ENCODE measurements at regions of chr1 and their contacts with region 1.

Region 1: GRCh38 chr1:172532700-172533509 is at the start of gene SUCO:
- DNase-seq: peak; percentile 100
- H3K4me3 Mint-ChIP-seq: peak within 1 kb of the TSS; percentile 94
- H3K27ac Mint-ChIP-seq: peak within 1 kb of the TSS; percentile 100
- H3K4me1 Mint-ChIP-seq: peaks cover 39% of the 10 kb centered on the region
- H3K27me3 Mint-ChIP-seq: no peaks in the 10 kb centered on the region
- total RNA-seq, gene SUCO: 23.9 TPM

Region 2: GRCh38 chr1:171741872-171742576 is 790.9 kb before region 1 on chr1 and contains the start of gene VAMP4:
- CTCF ChIA-PET with region 1: no interaction called
- intact Hi-C with region 1: loop called (anchors 1 kb)
- DNase-seq: peak; percentile 90
- H3K4me3 Mint-ChIP-seq: peak within 1 kb of the TSS; percentile 96
- H3K27ac Mint-ChIP-seq: peak within 1 kb of the TSS; percentile 99
- H3K4me1 Mint-ChIP-seq: peaks cover 40% of the 10 kb centered on the region
- H3K27me3 Mint-ChIP-seq: no peaks in the 10 kb centered on the region
- total RNA-seq, gene VAMP4: 10.5 to 10.9 TPM

Region 3: GRCh38 chr1:172254521-172255222 is 278.2 kb before region 1 on chr1:
- CTCF ChIA-PET with region 1: no interaction called
- intact Hi-C with region 1: no loop called
- DNase-seq: no peak
- H3K4me3 Mint-ChIP-seq: no peak overlapping the region
- H3K27ac Mint-ChIP-seq: no peak overlapping the region
- H3K4me1 Mint-ChIP-seq: peaks cover 18% of the 10 kb centered on the region
- H3K27me3 Mint-ChIP-seq: no peaks in the 10 kb centered on the region

Region 4: GRCh38 chr1:172338295-172338735 is 194.6 kb before region 1 on chr1:
- CTCF ChIA-PET with region 1: no interaction called
- intact Hi-C with region 1: loop called (anchors 1 kb)
- DNase-seq: peak; percentile 89
- H3K4me3 Mint-ChIP-seq: no peak overlapping the region
- H3K27ac Mint-ChIP-seq: peak overlapping the region; percentile 67
- H3K4me1 Mint-ChIP-seq: peaks cover 49% of the 10 kb centered on the region
- H3K27me3 Mint-ChIP-seq: no peaks in the 10 kb centered on the region

Region 5: GRCh38 chr1:172566196-172566997 is 33.5 kb after region 1 on chr1:
- CTCF ChIA-PET with region 1: no interaction called
- intact Hi-C with region 1: loop called (anchors 1 kb)
- DNase-seq: peak; percentile 43
- H3K4me3 Mint-ChIP-seq: no peak overlapping the region
- H3K27ac Mint-ChIP-seq: peak overlapping the region; percentile 54
- H3K4me1 Mint-ChIP-seq: peaks cover 16% of the 10 kb centered on the region
- H3K27me3 Mint-ChIP-seq: no peaks in the 10 kb centered on the region

Region 6: DNA sequence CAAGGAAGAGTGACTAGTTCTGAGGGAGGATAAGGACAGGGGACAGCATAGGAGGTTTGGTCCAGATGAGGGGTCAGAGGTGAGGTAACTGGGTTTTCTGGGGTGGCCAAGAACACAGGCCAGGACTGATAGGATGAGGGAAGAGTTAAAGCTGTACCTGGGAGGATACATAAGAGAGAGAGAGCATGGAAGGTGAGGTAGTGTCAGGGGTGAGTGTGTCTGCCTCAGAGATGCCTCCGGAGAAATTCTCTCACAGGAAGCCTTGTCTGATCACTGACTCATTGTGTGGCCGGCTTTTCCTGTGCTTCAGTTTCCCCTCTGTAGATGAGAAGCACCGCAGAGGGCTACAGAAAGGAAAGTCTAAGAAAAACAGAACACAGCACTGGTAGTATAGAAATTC is 166.2 kb after region 1 on chr1:
- CTCF ChIA-PET with region 1: no interaction called
- intact Hi-C with region 1: loop called (anchors 1 kb)
- DNase-seq: peak; percentile 88
- H3K4me3 Mint-ChIP-seq: peak overlapping the region; percentile 36
- H3K27ac Mint-ChIP-seq: peak overlapping the region; percentile 89
- H3K4me1 Mint-ChIP-seq: peaks cover 53% of the 10 kb centered on the region
- H3K27me3 Mint-ChIP-seq: no peaks in the 10 kb centered on the region

Region 7: DNA sequence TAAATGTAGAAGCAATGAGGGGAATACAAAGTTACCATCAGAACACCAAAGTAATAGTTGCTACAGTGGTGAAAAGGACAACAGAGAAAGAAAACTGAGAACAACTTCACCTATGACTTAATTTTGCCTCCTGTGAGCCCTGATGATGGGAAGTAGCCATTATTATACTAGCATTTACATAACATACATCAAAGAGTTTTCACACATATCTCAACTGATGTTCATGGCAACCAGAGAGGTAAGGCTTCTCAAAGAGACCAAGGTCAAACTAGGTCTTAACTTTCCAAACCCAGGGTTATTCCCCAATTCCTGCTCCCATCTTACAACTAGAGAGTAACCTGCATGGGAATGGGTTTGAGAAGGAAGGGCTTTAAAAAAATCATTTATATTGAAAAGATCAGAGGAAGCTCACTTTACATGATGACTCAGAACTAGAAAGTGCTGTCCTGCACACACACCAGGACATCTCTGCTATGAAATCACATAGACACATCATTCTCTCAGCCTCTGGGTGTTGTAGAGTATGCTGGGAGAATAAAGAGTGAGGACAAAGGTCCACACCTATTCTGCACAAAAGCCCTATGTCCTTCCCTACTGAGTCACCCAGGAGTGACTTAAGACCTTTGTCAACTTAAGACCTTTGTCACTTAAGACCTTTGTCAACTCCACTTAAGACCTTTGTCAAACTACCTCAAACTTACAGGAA is 338.1 kb after region 1 on chr1:
- CTCF ChIA-PET with region 1: no interaction called
- intact Hi-C with region 1: loop called (anchors 5 kb)
- DNase-seq: no peak
- H3K4me3 Mint-ChIP-seq: no peak overlapping the region
- H3K27ac Mint-ChIP-seq: no peak overlapping the region
- H3K4me1 Mint-ChIP-seq: peaks cover 32% of the 10 kb centered on the region
- H3K27me3 Mint-ChIP-seq: peaks cover 24% of the 10 kb centered on the region

Region 8: DNA sequence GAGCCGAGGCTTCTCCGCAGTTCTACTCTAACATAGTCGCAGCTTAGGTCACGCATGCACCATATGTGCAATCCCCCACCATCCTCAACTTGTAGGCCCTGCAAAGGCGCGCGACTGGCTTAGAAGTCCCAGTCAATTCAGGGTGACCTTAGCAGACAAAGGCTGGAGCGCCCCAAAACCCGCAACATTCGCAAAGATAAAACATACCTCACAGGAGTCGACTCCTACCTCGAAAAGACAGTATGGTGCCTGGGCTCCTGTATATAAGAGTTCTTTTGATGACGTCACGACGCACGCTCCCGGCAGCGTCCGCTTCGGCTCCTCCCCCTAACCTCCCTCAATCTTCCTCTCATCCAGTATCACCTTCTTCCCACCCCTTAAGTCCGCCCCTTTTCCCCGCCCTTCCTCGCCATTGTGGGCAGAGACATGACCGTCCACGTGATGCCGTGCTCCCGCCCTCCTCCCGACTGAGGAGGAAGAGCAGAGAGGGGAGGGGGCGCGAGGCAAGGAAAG is 1334.9 kb after region 1 on chr1 and contains the start of gene GAS5:
- CTCF ChIA-PET with region 1: no interaction called
- intact Hi-C with region 1: loop called (anchors 1 kb)
- DNase-seq: peak; percentile 100
- H3K4me3 Mint-ChIP-seq: peak within 1 kb of the TSS; percentile 94
- H3K27ac Mint-ChIP-seq: peak within 1 kb of the TSS; percentile 98
- H3K4me1 Mint-ChIP-seq: peaks cover 51% of the 10 kb centered on the region
- H3K27me3 Mint-ChIP-seq: no peaks in the 10 kb centered on the region
- total RNA-seq, gene GAS5: 1,367 to 1,374 TPM

Region 9: DNA sequence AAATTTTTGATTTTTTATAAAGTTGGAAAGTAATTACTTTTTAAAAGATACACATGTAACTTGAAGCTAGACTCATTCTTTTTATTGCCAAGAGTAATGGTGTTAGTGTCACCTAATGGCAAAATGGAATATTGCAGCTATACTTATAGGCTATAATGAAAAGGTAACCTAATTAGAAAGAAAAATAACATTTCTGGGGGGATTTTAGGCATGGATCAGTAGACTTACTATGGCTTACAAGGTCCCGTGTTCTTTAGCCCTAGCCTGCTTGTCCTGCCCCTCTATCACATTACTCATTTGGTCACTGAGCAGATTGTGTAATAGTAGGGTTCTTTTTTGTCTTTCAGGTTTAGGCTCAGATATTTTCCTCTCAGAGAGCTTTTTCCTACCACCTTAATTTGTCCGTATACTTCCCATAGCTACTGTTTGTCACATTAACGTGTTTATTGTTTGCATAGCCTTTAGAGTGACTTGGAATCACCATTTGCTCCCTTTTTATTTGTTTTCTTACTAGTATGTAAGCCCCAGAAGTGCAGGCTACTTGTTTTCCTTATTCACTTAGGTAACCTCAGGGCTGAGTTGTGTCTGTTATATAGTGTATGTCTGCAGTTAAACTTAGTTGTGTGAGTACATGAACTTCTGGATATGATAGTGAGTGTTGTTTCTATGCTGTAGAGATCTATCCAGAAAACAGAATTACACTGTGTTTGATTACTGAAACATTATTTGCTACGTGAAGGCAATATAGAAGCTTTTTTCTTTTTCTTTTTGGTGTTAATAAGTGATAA is 1685.1 kb after region 1 on chr1:
- CTCF ChIA-PET with region 1: no interaction called
- intact Hi-C with region 1: no loop called
- DNase-seq: no peak
- H3K4me3 Mint-ChIP-seq: no peak overlapping the region
- H3K27ac Mint-ChIP-seq: no peak overlapping the region
- H3K4me1 Mint-ChIP-seq: peaks cover 6% of the 10 kb centered on the region
- H3K27me3 Mint-ChIP-seq: no peaks in the 10 kb centered on the region

Measured in activated naive CD4-positive, alpha-beta T cell treated with anti-CD3 and anti-CD28 coated beads for 36 hours (primary cell).